ENCODE measurements at regions of chr19 and their contacts with region 1.

Region 1: DNA sequence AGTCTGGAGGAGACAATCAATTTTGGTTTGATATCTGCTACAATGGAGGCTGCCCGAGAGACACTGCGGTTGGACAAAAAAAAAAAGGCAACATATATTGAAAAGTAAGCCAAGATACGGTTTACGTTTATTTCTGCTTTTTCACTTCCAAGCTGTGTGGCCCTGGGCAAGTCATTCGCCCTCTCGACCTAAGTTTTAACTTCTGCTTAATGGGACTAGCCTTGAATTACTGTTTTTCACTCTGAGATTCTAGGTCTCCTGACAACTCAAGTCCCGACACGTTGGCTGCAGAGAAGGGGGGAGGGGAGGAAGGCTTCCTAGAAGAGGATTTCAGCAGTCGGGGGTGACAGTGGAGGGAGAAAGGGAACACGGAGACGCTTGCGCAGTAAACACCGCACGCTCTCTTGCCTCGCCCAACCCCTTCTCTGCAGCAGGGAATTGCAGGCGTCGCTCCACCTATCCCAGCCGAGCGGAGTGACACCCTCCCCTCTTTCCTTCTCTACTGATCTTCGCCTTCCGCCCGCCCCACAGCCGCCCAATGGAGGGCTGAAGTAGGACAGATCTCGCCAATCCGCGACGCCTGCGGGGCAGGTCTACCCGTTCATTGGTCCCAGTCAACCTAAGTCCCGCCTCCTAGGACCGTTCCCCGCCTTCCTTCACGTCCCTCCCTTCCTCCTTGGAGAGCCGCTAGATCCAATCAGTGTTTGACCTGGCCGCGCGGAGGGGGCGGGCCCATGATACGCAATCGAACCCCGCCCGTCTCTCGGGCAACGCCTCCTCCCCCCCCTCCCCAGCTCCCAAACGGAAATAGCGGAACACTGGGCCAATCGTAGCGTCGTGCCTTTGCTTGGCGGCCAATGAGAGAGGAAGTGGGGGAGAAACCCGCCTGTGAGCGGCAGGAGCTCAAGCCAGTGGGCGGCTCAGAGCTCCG is 529 bp upstream of the AP2A1 start:
- DNase-seq: peak; percentile 98 to 100 (median 100)
- H3K4me3 ChIP-seq: peak overlapping the region; percentile 75 to 88
- H3K4me3 Mint-ChIP-seq: peak overlapping the region; percentile 89 to 99 (median 94)
- H3K27ac ChIP-seq: peak overlapping the region; percentile 77
- H3K27ac Mint-ChIP-seq: peak overlapping the region; percentile 85 to 97 (median 96)
- H3K4me1 ChIP-seq: peaks cover 36% of the 10 kb centered on the region
- H3K4me1 Mint-ChIP-seq: peaks cover 30 to 48% (median 34%) of the 10 kb centered on the region in 4 donors
- H3K27me3 ChIP-seq: no peaks in the 10 kb centered on the region
- H3K27me3 Mint-ChIP-seq: no peaks in the 10 kb centered on the region

Region 2: DNA sequence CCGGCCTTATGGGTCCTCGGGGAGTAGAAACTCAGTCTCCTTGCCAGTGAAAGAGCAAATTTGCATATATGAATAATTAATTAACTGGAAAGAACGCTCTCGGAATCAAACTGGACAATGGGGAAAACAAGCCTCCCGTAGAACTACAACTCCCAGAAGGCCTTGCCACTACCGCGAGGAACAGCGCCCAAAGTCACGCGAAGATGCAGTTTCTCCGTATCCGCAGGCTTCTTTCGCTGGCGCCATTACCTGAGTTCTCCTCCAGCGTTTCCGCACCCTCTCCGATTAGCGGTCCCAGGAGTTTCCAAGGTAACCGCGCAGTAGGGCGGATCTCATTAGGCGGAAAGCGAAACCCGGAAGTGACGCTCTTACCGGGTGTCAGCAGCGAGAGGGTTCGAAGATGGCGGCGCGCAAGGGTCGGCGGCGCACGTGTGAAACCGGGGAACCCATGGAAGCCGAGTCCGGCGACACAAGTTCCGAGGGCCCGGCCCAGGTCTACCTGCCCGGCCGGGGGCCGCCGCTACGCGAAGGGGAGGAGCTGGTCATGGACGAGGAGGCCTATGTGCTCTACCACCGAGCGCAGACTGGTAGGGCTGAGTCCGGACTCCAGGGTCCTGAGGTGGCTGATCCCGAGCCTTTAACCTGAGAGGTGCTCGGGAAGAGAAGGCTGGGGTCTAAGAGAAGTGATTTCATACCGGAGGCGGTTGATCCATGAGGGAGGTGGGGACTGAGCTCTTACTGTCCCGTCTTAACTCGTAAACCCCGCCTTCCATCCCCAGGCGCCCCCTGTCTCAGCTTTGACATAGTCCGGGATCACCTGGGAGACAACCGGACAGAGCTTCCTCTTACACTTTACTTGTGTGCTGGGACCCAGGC is 1320.4 kb before region 1 on chr19 and contains the start of gene GRWD1:
- CTCF ChIA-PET with region 1: no interaction called
- POLR2A ChIA-PET with region 1: no interaction called
- intact Hi-C with region 1: loop called (anchors 1 kb)
- DNase-seq: peak; percentile 91 to 99 (median 96)
- H3K4me3 ChIP-seq: peak within 1 kb of the TSS; percentile 75 to 85
- H3K4me3 Mint-ChIP-seq: peak within 1 kb of the TSS; percentile 86 to 94 (median 90)
- H3K27ac ChIP-seq: peak within 1 kb of the TSS; percentile 83
- H3K27ac Mint-ChIP-seq: peak within 1 kb of the TSS; percentile 88 to 98 (median 94)
- H3K4me1 ChIP-seq: peaks cover 25% of the 10 kb centered on the region
- H3K4me1 Mint-ChIP-seq: peaks cover 19 to 48% (median 32%) of the 10 kb centered on the region in 4 donors
- H3K27me3 ChIP-seq: no peaks in the 10 kb centered on the region
- H3K27me3 Mint-ChIP-seq: peaks cover 10 to 17% of the 10 kb centered on the region in 2 donors
- total RNA-seq, gene GRWD1: 36.2 to 39.0 TPM

Region 3: DNA sequence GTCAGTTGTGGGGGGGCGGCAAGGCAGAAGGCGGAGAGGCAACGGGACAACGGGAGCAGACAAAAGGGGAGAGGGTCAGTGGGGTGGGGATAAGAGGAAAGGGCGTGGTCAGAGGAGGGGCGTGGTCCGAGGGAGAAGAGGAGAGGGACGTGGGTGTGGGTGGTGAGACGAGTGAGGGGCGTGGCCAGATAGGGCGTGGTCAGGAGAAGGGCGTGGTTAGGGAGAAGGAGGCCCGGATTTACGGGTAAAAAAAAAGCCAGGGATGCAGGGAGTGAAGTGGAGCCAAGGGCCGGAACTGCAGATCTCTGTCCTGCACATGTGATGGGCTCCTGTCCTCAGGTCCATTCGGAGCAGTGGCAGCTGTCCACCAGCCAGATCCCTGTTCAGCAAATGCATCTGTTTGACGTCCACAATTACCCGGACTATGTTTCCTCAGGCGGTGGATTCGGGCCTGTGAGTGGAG is 53.8 kb before region 1 on chr19:
- CTCF ChIA-PET with region 1: interaction called, 8 read pairs
- POLR2A ChIA-PET with region 1: interaction called, 15 read pairs
- intact Hi-C with region 1: loop called (anchors 1 kb)
- DNase-seq: no peak
- H3K4me3 ChIP-seq: no peak overlapping the region
- H3K4me3 Mint-ChIP-seq: no peak overlapping the region
- H3K27ac ChIP-seq: no peak overlapping the region
- H3K27ac Mint-ChIP-seq: no peak overlapping the region
- H3K4me1 ChIP-seq: peaks cover 4% of the 10 kb centered on the region
- H3K4me1 Mint-ChIP-seq: peaks cover 2 to 8% (median 5%) of the 10 kb centered on the region in 4 donors
- H3K27me3 ChIP-seq: no peaks in the 10 kb centered on the region
- H3K27me3 Mint-ChIP-seq: peaks cover 0 to 3% of the 10 kb centered on the region in 2 donors

Region 4: DNA sequence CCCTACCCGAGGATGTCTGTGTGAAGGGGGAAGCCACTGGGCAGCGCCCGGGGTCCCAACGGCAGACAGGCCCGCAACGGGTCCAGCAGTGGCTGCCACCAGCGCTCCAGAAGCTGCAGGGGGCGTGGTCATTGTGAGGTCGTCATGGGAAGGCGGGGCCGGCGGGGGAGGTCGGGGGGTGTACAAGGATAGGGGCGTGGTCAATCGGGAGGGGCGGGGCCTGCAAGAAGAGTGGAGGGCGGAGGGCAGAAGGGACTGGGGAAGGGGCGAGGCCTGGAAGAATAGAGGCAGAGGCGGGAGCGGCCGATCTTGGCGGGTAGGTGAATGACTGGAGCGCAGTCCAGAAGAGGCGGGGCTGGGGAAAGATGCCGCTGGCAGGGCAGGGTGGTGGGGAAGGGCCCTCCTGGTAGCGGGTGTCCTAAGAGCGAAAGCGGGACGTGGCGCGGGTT is 42.5 kb after region 1 on chr19:
- CTCF ChIA-PET with region 1: no interaction called
- POLR2A ChIA-PET with region 1: interaction called, 24 read pairs
- intact Hi-C with region 1: loop called (anchors 1 kb)
- DNase-seq: peak; percentile 79 to 94 (median 85)
- H3K4me3 ChIP-seq: peak overlapping the region; percentile 36 to 68
- H3K4me3 Mint-ChIP-seq: peak overlapping the region; percentile 86 to 98 (median 90)
- H3K27ac ChIP-seq: peak overlapping the region; percentile 71
- H3K27ac Mint-ChIP-seq: peak overlapping the region; percentile 91 to 97 (median 94)
- H3K4me1 ChIP-seq: peaks cover 27% of the 10 kb centered on the region
- H3K4me1 Mint-ChIP-seq: peaks cover 15 to 39% (median 27%) of the 10 kb centered on the region in 4 donors
- H3K27me3 ChIP-seq: no peaks in the 10 kb centered on the region
- H3K27me3 Mint-ChIP-seq: no peaks in the 10 kb centered on the region

Region 5: GRCh38 chr19:49843265-49843664 is 77.0 kb after region 1 on chr19:
- CTCF ChIA-PET with region 1: no interaction called
- POLR2A ChIA-PET with region 1: no interaction called
- intact Hi-C with region 1: no loop called
- DNase-seq: no peak
- H3K4me3 ChIP-seq: no peak overlapping the region
- H3K4me3 Mint-ChIP-seq: no peak overlapping the region
- H3K27ac ChIP-seq: no peak overlapping the region
- H3K27ac Mint-ChIP-seq: no peak overlapping the region
- H3K4me1 ChIP-seq: peaks cover 5% of the 10 kb centered on the region
- H3K4me1 Mint-ChIP-seq: peaks cover 2 to 8% (median 4%) of the 10 kb centered on the region in 4 donors
- H3K27me3 ChIP-seq: no peaks in the 10 kb centered on the region
- H3K27me3 Mint-ChIP-seq: no peaks in the 10 kb centered on the region

Region 6: DNA sequence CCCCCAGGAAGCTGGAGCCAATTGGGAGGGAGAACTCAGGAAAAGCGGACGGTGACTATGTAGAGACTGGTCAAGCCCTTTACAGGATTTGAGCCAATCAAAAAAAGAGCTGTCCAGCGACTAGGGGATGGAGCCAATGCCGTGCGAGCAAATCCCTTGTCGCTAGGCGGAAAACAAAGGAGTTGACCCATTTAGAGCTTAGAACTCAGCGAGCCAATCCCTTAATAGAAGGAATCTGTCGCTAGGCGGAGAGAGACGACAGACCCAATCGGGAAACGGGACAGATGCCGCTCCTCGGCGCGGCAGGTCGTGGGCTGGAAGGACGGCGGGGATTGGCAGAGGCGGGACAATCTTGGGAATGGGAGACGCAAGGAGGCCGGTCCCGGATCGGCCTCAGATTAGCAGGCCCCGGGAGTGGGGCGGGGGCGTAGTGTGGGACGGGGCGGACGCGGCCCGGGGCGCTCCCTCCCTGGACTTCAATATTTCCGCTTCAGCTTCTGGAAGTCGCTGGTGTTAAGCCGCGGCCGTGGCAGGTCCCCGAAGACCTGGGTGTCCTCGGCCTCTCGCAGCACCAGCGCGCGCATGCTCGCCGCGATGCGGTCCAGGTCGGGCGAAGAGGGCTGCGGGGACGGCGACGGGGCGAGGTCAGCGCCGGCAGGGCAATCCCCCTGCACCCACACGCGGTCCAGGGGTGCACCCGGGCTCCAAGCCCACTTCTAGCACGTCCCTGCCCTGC is 103.3 kb after region 1 on chr19:
- CTCF ChIA-PET with region 1: no interaction called
- POLR2A ChIA-PET with region 1: interaction called, 9 read pairs
- intact Hi-C with region 1: loop called (anchors 2 kb)
- DNase-seq: peak; percentile 92 to 94 (median 92)
- H3K4me3 ChIP-seq: peak overlapping the region; percentile 47 to 70
- H3K4me3 Mint-ChIP-seq: peak overlapping the region in 3 of 8 donors; percentile 78 to 87 (median 81)
- H3K27ac ChIP-seq: peak overlapping the region; percentile 66
- H3K27ac Mint-ChIP-seq: peak overlapping the region in 5 of 7 donors; percentile 88 to 94 (median 92)
- H3K4me1 ChIP-seq: peaks cover 53% of the 10 kb centered on the region
- H3K4me1 Mint-ChIP-seq: peaks cover 17 to 43% (median 22%) of the 10 kb centered on the region in 4 donors
- H3K27me3 ChIP-seq: no peaks in the 10 kb centered on the region
- H3K27me3 Mint-ChIP-seq: no peaks in the 10 kb centered on the region